Gastrocnemius medialis (tissue), 4 donors: ENCODE measurements at regions of chr4 and their contacts with region 1.

Region 1: GRCh38 chr4:75989846-75990528 is 758 bp downstream of the SDAD1 start:
- DNase-seq: no peak
- ATAC-seq: peak in 1 of 2 donors; percentile 18
- H3K4me3 ChIP-seq: peak overlapping the region; percentile 72 to 97 (median 88)
- H3K27ac ChIP-seq: peak overlapping the region; percentile 84 to 90 (median 87)
- H3K4me1 ChIP-seq: peaks cover 19 to 21% of the 10 kb centered on the region in 2 donors
- H3K27me3 ChIP-seq: no peaks in the 10 kb centered on the region
- CTCF ChIP-seq: no peak
- POLR2A ChIP-seq: no peak

Region 2: DNA sequence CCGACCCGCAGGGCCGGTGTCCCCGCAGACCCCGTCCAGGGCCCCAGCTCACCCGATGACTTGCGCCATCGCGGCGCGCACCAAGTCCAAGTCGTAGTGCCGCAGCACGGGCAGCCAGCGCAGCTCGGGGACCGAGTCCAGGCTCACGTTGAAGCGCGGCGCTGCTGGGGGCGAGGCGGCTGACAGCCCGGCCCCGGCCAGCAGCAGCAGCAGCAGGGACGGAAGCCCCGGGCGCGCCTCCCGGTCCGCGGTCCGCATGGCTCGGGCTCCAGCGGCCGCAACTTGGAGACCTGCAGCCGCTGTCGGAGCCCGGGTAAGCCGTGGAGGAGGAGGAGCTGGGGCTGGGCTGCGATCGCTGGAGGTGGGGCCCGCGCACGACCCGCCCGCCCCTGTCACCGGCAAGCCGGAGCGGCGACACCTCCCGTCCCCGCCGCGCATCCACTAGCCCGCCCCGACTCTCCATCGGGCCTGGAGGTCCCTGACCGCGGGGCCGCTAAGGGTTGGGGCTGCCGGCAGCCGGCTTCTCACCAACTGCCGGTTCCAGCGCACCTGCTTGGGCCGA is 49.2 kb before region 1 on chr4 and contains the start of gene NAAA:
- in situ Hi-C with region 1: no loop called
- intact Hi-C with region 1: loop called (anchors 2 kb)
- DNase-seq: peak; percentile 27 to 81
- ATAC-seq: peak; percentile 65 to 90
- H3K4me3 ChIP-seq: peak within 1 kb of the TSS; percentile 77 to 92 (median 82)
- H3K27ac ChIP-seq: peak within 1 kb of the TSS; percentile 72 to 88 (median 80)
- H3K4me1 ChIP-seq: no peaks in the 10 kb centered on the region
- H3K27me3 ChIP-seq: no peaks in the 10 kb centered on the region
- CTCF ChIP-seq: peak in 3 of 5 experiments; percentile 27 to 51 (median 44)
- POLR2A ChIP-seq: peak; percentile 20 to 30
- total RNA-seq, gene NAAA: 18.5 to 69.8 (median 42.3) TPM

Region 3: GRCh38 chr4:76067652-76068286 is 77.8 kb after region 1 on chr4:
- in situ Hi-C with region 1: loop called (anchors 5 kb)
- intact Hi-C with region 1: loop called (anchors 1 kb)
- DNase-seq: peak; percentile 35 to 50
- ATAC-seq: peak; percentile 87 to 91
- H3K4me3 ChIP-seq: no peak overlapping the region
- H3K27ac ChIP-seq: no peak overlapping the region
- H3K4me1 ChIP-seq: peaks cover 0 to 3% of the 10 kb centered on the region in 2 donors
- H3K27me3 ChIP-seq: no peaks in the 10 kb centered on the region
- CTCF ChIP-seq: peak; percentile 62 to 86 (median 74)
- POLR2A ChIP-seq: no peak

Region 4: GRCh38 chr4:76074468-76074867 is 84.5 kb after region 1 on chr4 and contains the start of gene ART3:
- in situ Hi-C with region 1: loop called (anchors 5 kb)
- intact Hi-C with region 1: loop called (anchors 2 kb)
- DNase-seq: peak; percentile 71 to 77
- ATAC-seq: peak; percentile 76 to 82
- H3K4me3 ChIP-seq: peak within 1 kb of the TSS; percentile 44 to 61 (median 50)
- H3K27ac ChIP-seq: peak within 1 kb of the TSS; percentile 80 to 93 (median 84)
- H3K4me1 ChIP-seq: peaks cover 29 to 36% of the 10 kb centered on the region in 2 donors
- H3K27me3 ChIP-seq: no peaks in the 10 kb centered on the region
- CTCF ChIP-seq: no peak
- POLR2A ChIP-seq: peak; percentile 28 to 90
- total RNA-seq, gene ART3: 55.2 to 91.0 (median 83.4) TPM

Region 5: GRCh38 chr4:76148142-76148865 is 158.3 kb after region 1 on chr4 and contains the start of gene NUP54:
- in situ Hi-C with region 1: no loop called
- intact Hi-C with region 1: loop called (anchors 1 kb)
- DNase-seq: peak; percentile 84 to 91
- ATAC-seq: peak; percentile 98 to 99
- H3K4me3 ChIP-seq: peak within 1 kb of the TSS; percentile 66 to 99 (median 89)
- H3K27ac ChIP-seq: peak within 1 kb of the TSS; percentile 82 to 98 (median 92)
- H3K4me1 ChIP-seq: peaks cover 31 to 36% of the 10 kb centered on the region in 2 donors
- H3K27me3 ChIP-seq: no peaks in the 10 kb centered on the region
- CTCF ChIP-seq: no peak
- POLR2A ChIP-seq: peak; percentile 81 to 82
- total RNA-seq, gene NUP54: 15.7 to 22.8 (median 20.0) TPM

Region 6: GRCh38 chr4:76251441-76252270 is 261.7 kb after region 1 on chr4 and contains the start of gene FAM47E:
- in situ Hi-C with region 1: no loop called
- intact Hi-C with region 1: loop called (anchors 5 kb)
- DNase-seq: peak; percentile 73 to 85
- ATAC-seq: peak; percentile 89 to 92
- H3K4me3 ChIP-seq: peak within 1 kb of the TSS; percentile 63 to 84 (median 65)
- H3K27ac ChIP-seq: peak within 1 kb of the TSS; percentile 73 to 90 (median 78)
- H3K4me1 ChIP-seq: peaks cover 3 to 8% of the 10 kb centered on the region in 2 donors
- H3K27me3 ChIP-seq: no peaks in the 10 kb centered on the region
- CTCF ChIP-seq: peak; percentile 38 to 63 (median 53)
- POLR2A ChIP-seq: peak; percentile 14 to 52
- total RNA-seq, gene FAM47E: 0.56 to 6.8 (median 3.8) TPM

Region 7: GRCh38 chr4:76305971-76306881 is 316.2 kb after region 1 on chr4 and contains the start of gene STBD1:
- in situ Hi-C with region 1: no loop called
- intact Hi-C with region 1: no loop called
- DNase-seq: peak; percentile 86 to 90
- ATAC-seq: peak; percentile 60 to 70
- H3K4me3 ChIP-seq: peak within 1 kb of the TSS; percentile 79 to 87 (median 86)
- H3K27ac ChIP-seq: peak within 1 kb of the TSS; percentile 93 to 98 (median 96)
- H3K4me1 ChIP-seq: peaks cover 68 to 69% of the 10 kb centered on the region in 2 donors
- H3K27me3 ChIP-seq: no peaks in the 10 kb centered on the region
- CTCF ChIP-seq: peak in 1 of 5 experiments; percentile 7
- POLR2A ChIP-seq: peak; percentile 81 to 88
- total RNA-seq, gene STBD1: 17.9 to 57.5 (median 41.5) TPM